ENCODE measurements at regions of chr12 and their contacts with region 1.

Region 1: DNA sequence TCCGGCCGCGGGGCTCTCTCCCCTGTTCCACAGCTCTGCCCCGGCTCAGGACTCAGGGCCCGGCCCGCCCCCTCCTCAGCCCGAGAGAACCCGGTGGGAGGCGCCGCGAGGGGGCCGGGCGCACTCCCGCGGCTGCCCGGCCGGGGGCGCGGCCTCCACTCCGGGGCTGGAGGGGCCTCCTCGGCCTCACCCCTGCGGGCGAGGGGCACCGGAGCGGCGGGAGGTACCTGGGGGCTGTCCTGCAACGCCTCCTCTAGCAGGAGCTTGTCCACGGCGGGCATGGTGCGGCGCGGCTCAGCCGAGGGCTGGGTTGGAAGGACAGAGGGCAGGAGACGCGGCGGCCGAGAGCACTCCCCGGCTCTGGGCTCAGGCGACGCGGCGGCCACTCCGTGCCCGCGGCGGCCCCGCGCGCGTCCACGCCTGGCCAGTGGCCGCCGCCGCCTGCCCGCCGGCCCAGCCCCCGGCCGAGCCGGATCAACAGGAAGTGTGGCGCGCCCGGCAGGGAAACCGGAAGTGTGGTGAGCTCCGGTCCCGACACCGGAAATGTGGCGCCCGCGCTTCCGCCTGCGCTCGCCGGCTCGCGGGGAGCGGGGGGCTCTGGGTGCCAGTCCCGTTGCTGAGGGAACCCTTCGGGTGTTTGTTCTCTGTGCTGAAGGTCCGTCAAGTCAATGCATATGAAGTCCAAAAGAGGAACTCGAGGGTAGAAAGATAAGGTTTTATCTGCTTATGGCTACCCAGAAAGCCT is at the start of gene APPL2:
- DNase-seq: peak; percentile 96
- ATAC-seq: peak; percentile 96
- total RNA-seq, gene APPL2: 20.9 TPM

Region 2: GRCh38 chr12:104137913-104138796 is 1097.7 kb before region 1 on chr12 and contains the start of gene NFYB:
- intact Hi-C with region 1: loop called (anchors 10 kb)
- DNase-seq: peak; percentile 97
- ATAC-seq: peak; percentile 94
- total RNA-seq, gene NFYB: 39.8 TPM

Region 3: GRCh38 chr12:105218434-105218833 is 17.5 kb before region 1 on chr12:
- intact Hi-C with region 1: loop called (anchors 2 kb)
- DNase-seq: no peak
- ATAC-seq: peak; percentile 51

Measured in Right ventricle myocardium inferior (tissue), 1 donor.